Psoas muscle (tissue), 8 donors: ENCODE measurements at regions of chr4 and their contacts with region 1.

Region 1: DNA sequence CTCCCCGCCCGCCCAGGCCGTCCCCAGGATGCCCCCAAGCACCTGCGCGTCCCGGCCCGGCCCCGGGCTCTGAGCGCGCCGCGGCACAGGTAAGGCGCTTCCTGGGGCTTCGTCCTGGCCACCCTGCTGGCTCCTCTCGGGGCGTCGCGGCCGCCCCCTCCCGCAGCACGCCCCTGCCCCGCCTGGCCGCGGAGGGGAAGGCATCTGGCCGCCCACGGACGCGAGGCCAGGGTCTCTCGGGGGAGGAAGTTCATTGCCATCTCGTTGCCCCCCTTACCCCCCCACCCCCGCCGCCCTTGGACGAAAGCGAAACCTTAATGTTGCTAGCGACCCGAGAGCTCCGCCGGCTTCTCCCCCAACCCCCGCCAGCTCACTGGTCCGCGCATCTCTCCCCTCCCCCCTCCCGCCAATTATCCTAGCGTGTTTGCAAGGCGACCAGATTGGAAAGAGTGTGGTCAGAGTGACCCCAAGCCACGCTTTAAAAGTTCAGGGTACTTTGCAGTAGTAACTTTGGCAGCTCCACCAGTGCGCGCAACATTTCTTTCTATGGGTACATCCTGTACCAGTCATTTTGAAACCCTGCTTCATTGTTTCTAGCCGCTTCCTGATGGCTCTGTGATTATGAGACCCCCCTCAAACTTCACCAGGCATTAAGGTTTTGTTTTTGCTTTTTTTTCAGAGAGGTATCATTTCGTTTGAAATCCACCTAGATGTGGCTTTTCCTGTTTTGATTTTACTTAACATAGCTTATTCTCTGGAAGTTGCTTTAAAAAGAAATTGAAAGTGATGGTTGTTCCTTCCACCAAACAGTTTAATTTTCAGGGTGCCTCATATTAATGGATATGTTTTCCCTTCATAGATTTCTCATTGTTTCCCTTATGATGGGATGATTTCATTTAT is 626 bp downstream of the TBC1D1 start:
- DNase-seq: peak in 1 of 2 donors; percentile 74
- ATAC-seq: peak; percentile 38 to 55 (median 51)
- H3K4me3 ChIP-seq: peak overlapping the region; percentile 94
- H3K27ac ChIP-seq: peak overlapping the region; percentile 76
- H3K4me1 ChIP-seq: peaks cover 3% of the 10 kb centered on the region
- H3K27me3 ChIP-seq: no peaks in the 10 kb centered on the region
- CTCF ChIP-seq: no peak

Region 2: GRCh38 chr4:37802068-37802666 is 89.3 kb before region 1 on chr4:
- intact Hi-C with region 1: loop called (anchors 2 to 5 kb)
- DNase-seq: peak in 1 of 2 donors; percentile 25
- ATAC-seq: peak; percentile 80 to 92 (median 88)
- H3K4me3 ChIP-seq: no peak overlapping the region
- H3K27ac ChIP-seq: no peak overlapping the region
- H3K4me1 ChIP-seq: no peaks in the 10 kb centered on the region
- H3K27me3 ChIP-seq: no peaks in the 10 kb centered on the region
- CTCF ChIP-seq: peak; percentile 60

Region 3: GRCh38 chr4:37837446-37837845 is 54.1 kb before region 1 on chr4:
- intact Hi-C with region 1: no loop called
- DNase-seq: no peak
- ATAC-seq: no peak
- H3K4me3 ChIP-seq: no peak overlapping the region
- H3K27ac ChIP-seq: no peak overlapping the region
- H3K4me1 ChIP-seq: no peaks in the 10 kb centered on the region
- H3K27me3 ChIP-seq: no peaks in the 10 kb centered on the region
- CTCF ChIP-seq: no peak

Region 4: GRCh38 chr4:37936889-37937498 is 45.5 kb after region 1 on chr4:
- intact Hi-C with region 1: loop called (anchors 5 kb)
- DNase-seq: peak; percentile 56 to 91
- ATAC-seq: peak; percentile 87 to 94 (median 90)
- H3K4me3 ChIP-seq: peak overlapping the region; percentile 61
- H3K27ac ChIP-seq: peak overlapping the region; percentile 88
- H3K4me1 ChIP-seq: peaks cover 47% of the 10 kb centered on the region
- H3K27me3 ChIP-seq: no peaks in the 10 kb centered on the region
- CTCF ChIP-seq: no peak

Region 5: GRCh38 chr4:37977471-37978247 is 86.1 kb after region 1 on chr4:
- intact Hi-C with region 1: loop called (anchors 5 kb)
- DNase-seq: peak; percentile 72 to 89
- ATAC-seq: peak; percentile 82 to 93 (median 92)
- H3K4me3 ChIP-seq: peak overlapping the region; percentile 91
- H3K27ac ChIP-seq: peak overlapping the region; percentile 87
- H3K4me1 ChIP-seq: peaks cover 7% of the 10 kb centered on the region
- H3K27me3 ChIP-seq: no peaks in the 10 kb centered on the region
- CTCF ChIP-seq: peak; percentile 70